HepG2 (cell line): ENCODE measurements at regions of chr4 and their contacts with region 1.

Region 1: DNA sequence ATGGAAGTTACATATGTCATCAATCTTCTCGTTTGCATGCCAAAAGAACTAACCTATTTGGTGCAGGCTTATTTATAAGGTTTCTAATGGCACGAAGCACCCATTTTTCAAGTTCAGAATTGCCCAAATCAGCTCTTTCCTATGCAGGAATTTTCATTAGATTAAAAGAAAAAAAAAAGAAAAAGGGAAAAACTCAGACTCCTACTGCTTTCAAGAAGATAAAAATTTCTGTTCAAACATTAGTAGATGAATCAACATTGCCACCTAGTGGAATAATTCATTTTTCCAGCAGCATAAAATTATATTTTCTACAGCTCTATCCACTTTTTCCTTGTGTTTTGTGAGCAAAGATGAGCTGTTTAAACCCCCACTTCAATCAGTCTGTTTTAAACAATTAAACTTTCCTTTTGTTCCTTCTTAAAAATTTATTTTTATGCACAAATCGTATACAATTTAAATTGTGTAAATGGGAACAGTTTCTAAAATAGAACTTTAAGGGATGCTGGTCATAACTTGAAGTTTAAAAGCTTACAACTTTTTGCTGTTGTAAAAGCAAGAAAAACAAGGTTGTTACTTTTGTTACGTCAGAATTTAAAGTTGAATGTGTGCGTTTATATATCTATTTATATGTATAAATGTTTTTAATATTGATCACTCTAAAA is 309.9 kb downstream of the ARAP2 start:
- DNase-seq: peak; percentile 7
- ATAC-seq: no peak
- H3K4me3 ChIP-seq: no peak overlapping the region
- H3K27ac ChIP-seq: no peak overlapping the region
- H3K4me1 ChIP-seq: no peaks in the 10 kb centered on the region
- H3K27me3 ChIP-seq: no peaks in the 10 kb centered on the region
- CTCF ChIP-seq: peak; percentile 40
- EP300 ChIP-seq: no peak
- POLR2A ChIP-seq: no peak
- RAD21 ChIP-seq: no peak

Region 2: GRCh38 chr4:34953145-34953799 is 981.2 kb before region 1 on chr4:
- CTCF ChIA-PET with region 1: no interaction called
- POLR2A ChIA-PET with region 1: no interaction called
- in situ Hi-C with region 1: no loop called
- intact Hi-C with region 1: loop called (anchors 10 kb)
- DNase-seq: peak; percentile 58
- ATAC-seq: peak; percentile 100
- H3K4me3 ChIP-seq: no peak overlapping the region
- H3K27ac ChIP-seq: no peak overlapping the region
- H3K4me1 ChIP-seq: no peaks in the 10 kb centered on the region
- H3K27me3 ChIP-seq: no peaks in the 10 kb centered on the region
- CTCF ChIP-seq: peak; percentile 64
- EP300 ChIP-seq: no peak
- POLR2A ChIP-seq: no peak
- RAD21 ChIP-seq: 0 out of 2 replicates have a peak, but pooled peaks have one; percentile 39